IMR-90 (cell line): ENCODE measurements at regions of chr2 and their contacts with region 1.

Region 1: GRCh38 chr2:140604788-140605187 is 1526.0 kb downstream of the LRP1B start:
- DNase-seq: no peak
- ATAC-seq: no peak
- H3K4me3 ChIP-seq: no peak overlapping the region
- H3K27ac ChIP-seq: no peak overlapping the region
- H3K4me1 ChIP-seq: no peaks in the 10 kb centered on the region
- H3K27me3 ChIP-seq: no peaks in the 10 kb centered on the region
- CTCF ChIP-seq: no peak
- POLR2A ChIP-seq: no peak
- RAD21 ChIP-seq: no peak

Region 2: DNA sequence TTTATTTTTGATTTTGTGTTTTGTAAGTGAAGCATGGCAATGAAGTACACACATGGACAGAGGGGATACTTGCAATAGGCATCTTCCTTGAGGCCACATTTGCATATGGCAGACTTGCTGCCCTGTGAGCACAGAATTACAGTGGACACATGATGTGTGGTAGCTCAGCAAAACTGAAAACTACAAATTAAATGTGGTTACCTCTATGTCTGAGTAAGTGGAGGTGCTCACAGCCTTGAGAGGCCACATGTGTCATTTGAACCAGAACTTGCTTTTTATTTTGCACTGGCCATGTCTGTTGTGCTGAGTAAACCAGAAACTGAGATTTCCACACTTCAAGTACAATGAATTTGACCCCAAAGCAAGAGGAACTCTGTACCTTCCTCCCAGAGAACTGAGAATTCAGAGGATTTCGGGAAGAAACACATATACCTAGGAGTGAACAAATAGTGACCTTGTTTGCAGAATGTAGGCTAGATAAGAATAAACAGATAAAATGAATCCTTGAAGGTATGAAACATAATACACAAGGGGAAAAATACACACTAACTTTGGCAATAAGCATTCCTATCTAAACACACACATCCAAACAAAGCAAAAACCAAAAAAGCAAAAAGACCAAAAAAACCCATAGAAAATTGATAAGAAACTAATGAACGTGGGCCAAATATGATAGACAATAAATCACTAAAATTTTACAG is 825.9 kb before region 1 on chr2:
- CTCF ChIA-PET with region 1: no interaction called
- POLR2A ChIA-PET with region 1: no interaction called
- dilution Hi-C with region 1: no loop called
- in situ Hi-C with region 1: no loop called
- intact Hi-C with region 1: loop called (anchors 5 kb)
- DNase-seq: no peak
- ATAC-seq: no peak
- H3K4me3 ChIP-seq: no peak overlapping the region
- H3K27ac ChIP-seq: no peak overlapping the region
- H3K4me1 ChIP-seq: no peaks in the 10 kb centered on the region
- H3K27me3 ChIP-seq: no peaks in the 10 kb centered on the region
- CTCF ChIP-seq: no peak
- POLR2A ChIP-seq: no peak
- RAD21 ChIP-seq: no peak

Region 3: DNA sequence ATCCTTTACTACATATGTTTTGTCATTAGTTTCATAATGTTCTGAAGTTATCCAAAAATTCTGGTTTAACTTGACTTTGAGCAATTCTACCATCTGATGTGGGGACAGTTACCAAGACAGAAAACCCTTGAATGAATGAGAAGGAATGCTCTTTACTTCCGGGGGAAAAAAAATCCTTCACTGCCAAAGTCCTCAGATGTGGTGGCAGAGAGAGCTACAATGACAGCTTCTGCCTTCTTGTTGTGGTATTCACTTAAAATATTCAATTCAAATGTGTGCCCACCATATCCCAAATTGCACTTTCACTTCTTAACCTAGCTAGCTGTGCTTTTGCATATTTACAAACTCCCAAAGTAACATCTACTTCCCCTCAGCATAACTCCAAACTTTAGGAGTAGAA is 292.9 kb before region 1 on chr2:
- CTCF ChIA-PET with region 1: no interaction called
- POLR2A ChIA-PET with region 1: no interaction called
- dilution Hi-C with region 1: no loop called
- in situ Hi-C with region 1: no loop called
- intact Hi-C with region 1: no loop called
- DNase-seq: no peak
- ATAC-seq: no peak
- H3K4me3 ChIP-seq: no peak overlapping the region
- H3K27ac ChIP-seq: no peak overlapping the region
- H3K4me1 ChIP-seq: no peaks in the 10 kb centered on the region
- H3K27me3 ChIP-seq: no peaks in the 10 kb centered on the region
- CTCF ChIP-seq: no peak
- POLR2A ChIP-seq: no peak
- RAD21 ChIP-seq: no peak